ENCODE measurements at regions of chr19 and their contacts with region 1.

Region 1: DNA sequence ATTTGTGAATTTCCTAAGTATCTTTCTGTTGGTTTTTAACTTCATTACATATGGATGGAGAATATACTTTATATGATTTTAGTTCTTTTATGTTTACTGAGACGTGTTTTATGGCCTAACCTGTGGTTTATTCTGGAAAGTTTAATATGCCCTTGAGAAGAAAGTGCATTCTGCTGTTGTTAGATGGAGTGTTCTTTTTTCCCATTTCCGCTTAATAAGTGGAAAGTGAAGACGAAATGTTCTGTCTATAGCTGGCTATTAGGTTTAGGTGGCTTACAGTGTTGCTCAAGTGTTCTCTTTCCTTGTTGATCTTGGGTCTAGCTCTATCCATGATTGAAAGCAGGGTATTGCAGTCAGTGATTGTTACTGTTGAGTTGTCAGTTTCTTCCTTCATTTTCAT is 17.2 kb upstream of the TIMM50 start:
- DNase-seq: no peak
- H3K4me3 Mint-ChIP-seq: no peak overlapping the region
- H3K27ac Mint-ChIP-seq: no peak overlapping the region
- H3K4me1 Mint-ChIP-seq: no peaks in the 10 kb centered on the region
- H3K27me3 Mint-ChIP-seq: no peaks in the 10 kb centered on the region

Region 2: GRCh38 chr19:39474139-39474622 is 10.8 kb after region 1 on chr19:
- CTCF ChIA-PET with region 1: interaction called, 20 read pairs
- POLR2A ChIA-PET with region 1: interaction called, 3 read pairs
- DNase-seq: peak; percentile 66
- H3K4me3 Mint-ChIP-seq: no peak overlapping the region
- H3K27ac Mint-ChIP-seq: no peak overlapping the region
- H3K4me1 Mint-ChIP-seq: peaks cover 11% of the 10 kb centered on the region
- H3K27me3 Mint-ChIP-seq: no peaks in the 10 kb centered on the region

Region 3: GRCh38 chr19:39497996-39498797 is 34.8 kb after region 1 on chr19:
- CTCF ChIA-PET with region 1: no interaction called
- POLR2A ChIA-PET with region 1: no interaction called
- DNase-seq: peak; percentile 40
- H3K4me3 Mint-ChIP-seq: peak overlapping the region; percentile 2
- H3K27ac Mint-ChIP-seq: no peak overlapping the region
- H3K4me1 Mint-ChIP-seq: peaks cover 17% of the 10 kb centered on the region
- H3K27me3 Mint-ChIP-seq: peaks cover 47% of the 10 kb centered on the region

Measured in activated CD4-positive, alpha-beta memory T cell treated with anti-CD3 and anti-CD28 coated beads, Interleukin-2, amount 10 ng/mL, durations not matched to agents 7 days and 5 days (primary cell).